Calu3 (cell line): ENCODE measurements at regions of chr20 and their contacts with region 1.

Region 1: GRCh38 chr20:44111712-44112335 is 75.2 kb downstream of the JPH2 start:
- DNase-seq: no peak
- H3K4me3 Mint-ChIP-seq: no peak overlapping the region
- H3K27ac Mint-ChIP-seq: no peak overlapping the region
- H3K4me1 Mint-ChIP-seq: no peaks in the 10 kb centered on the region
- H3K27me3 Mint-ChIP-seq: peaks cover 75% of the 10 kb centered on the region
- CTCF ChIP-seq: no peak

Region 2: GRCh38 chr20:43477193-43477592 is 634.6 kb before region 1 on chr20:
- CTCF ChIA-PET with region 1: no interaction called
- intact Hi-C with region 1: no loop called
- DNase-seq: no peak
- H3K4me3 Mint-ChIP-seq: no peak overlapping the region
- H3K27ac Mint-ChIP-seq: no peak overlapping the region
- H3K4me1 Mint-ChIP-seq: no peaks in the 10 kb centered on the region
- H3K27me3 Mint-ChIP-seq: peaks cover 9% of the 10 kb centered on the region
- CTCF ChIP-seq: no peak

Region 3: DNA sequence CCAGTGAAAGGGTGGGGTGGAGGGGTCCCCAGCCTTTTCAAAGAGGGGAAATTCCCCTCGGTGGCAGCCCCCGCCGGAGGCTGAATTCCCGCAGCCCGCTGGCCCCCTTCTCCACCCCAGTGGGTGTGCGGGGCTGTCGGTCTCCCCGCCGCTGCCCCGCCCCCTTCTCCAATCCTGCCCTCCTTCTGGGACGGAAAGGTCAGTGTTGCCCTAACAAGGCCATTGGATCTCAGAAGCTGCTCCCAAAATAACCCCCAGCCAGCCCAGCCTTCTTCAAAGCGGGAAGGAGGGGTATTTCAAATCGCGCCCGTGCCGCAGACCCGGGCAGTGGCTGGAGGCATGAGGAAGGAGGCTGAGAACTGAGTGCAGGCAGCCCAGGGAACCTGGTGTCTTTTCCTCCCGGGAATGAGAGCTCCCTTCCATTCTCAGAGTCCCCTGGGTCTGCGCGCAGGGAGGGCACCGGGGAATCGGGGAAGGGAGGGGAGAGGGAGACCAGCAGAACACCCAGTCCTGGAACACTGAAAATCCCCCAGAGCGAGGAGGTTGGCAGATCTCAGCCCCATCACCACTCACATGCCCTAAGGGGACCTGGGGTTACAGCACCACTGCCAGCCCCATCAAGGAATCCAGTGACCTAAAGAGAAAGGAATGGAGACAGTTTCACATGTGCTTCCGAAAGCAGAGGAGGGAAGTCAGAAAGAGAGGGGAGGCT is 75.4 kb after region 1 on chr20 and contains the start of gene JPH2:
- CTCF ChIA-PET with region 1: interaction called, 133 read pairs
- intact Hi-C with region 1: loop called (anchors 1 kb)
- DNase-seq: peak; percentile 44
- H3K4me3 Mint-ChIP-seq: peak within 1 kb of the TSS; percentile 63
- H3K27ac Mint-ChIP-seq: no peak within 1 kb of the TSS
- H3K4me1 Mint-ChIP-seq: peaks cover 16% of the 10 kb centered on the region
- H3K27me3 Mint-ChIP-seq: peaks cover 15% of the 10 kb centered on the region
- CTCF ChIP-seq: no peak
- total RNA-seq, gene JPH2: 0.50 and 0.59 TPM in 2 replicates

Region 4: GRCh38 chr20:44196271-44196670 is 84.4 kb after region 1 on chr20:
- CTCF ChIA-PET with region 1: interaction called, 133 read pairs
- intact Hi-C with region 1: no loop called
- DNase-seq: no peak
- H3K4me3 Mint-ChIP-seq: no peak overlapping the region
- H3K27ac Mint-ChIP-seq: no peak overlapping the region
- H3K4me1 Mint-ChIP-seq: peaks cover 23% of the 10 kb centered on the region
- H3K27me3 Mint-ChIP-seq: peaks cover 15% of the 10 kb centered on the region
- CTCF ChIP-seq: no peak

Region 5: GRCh38 chr20:44475694-44476560 is 364.1 kb after region 1 on chr20 and contains the start of gene TTPAL:
- CTCF ChIA-PET with region 1: no interaction called
- intact Hi-C with region 1: loop called (anchors 1 kb)
- DNase-seq: peak; percentile 98
- H3K4me3 Mint-ChIP-seq: peak within 1 kb of the TSS; percentile 100
- H3K27ac Mint-ChIP-seq: peak within 1 kb of the TSS; percentile 94
- H3K4me1 Mint-ChIP-seq: peaks cover 26% of the 10 kb centered on the region
- H3K27me3 Mint-ChIP-seq: no peaks in the 10 kb centered on the region
- CTCF ChIP-seq: no peak
- total RNA-seq, gene TTPAL: 39.9 and 42.2 TPM in 2 replicates